Posterior vena cava (tissue), 2 donors: ENCODE measurements at regions of chr2 and their contacts with region 1.

Region 1: DNA sequence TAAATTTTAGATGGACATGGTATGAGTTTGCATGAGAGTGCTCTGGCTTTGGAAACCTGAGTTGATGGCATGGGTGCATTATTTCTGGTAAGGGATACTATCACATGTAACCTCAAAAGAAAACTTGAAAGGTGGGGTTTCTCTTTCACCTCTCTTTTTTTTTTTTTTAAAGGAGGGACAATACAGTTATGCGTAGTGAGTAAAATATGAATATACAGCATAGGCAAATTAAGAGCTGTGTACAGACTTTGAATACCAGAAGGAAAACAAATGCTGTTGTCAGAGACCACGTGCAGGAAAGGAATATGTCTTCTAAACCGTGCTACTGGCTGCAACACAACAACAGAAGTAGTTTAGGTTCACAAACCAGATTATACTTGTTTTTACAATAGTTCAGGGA is 82.1 kb downstream of the MAP4K4 start:
- DNase-seq: no peak

Region 2: GRCh38 chr2:101818531-101819451 is 39.1 kb after region 1 on chr2:
- intact Hi-C with region 1: loop called in 1 of 2 experiments (anchors 1 kb)
- DNase-seq: no peak